Heart left ventricle (tissue), 16 donors: ENCODE measurements at regions of chr14 and their contacts with region 1.

Region 1: GRCh38 chr14:73713803-73714655 is at the start of gene PNMA1:
- DNase-seq: peak; percentile 90 to 93 (median 92)
- ATAC-seq: peak; percentile 55 to 89 (median 86)
- H3K4me3 ChIP-seq: peak within 1 kb of the TSS; percentile 69 to 94 (median 86)
- H3K27ac ChIP-seq: peak within 1 kb of the TSS; percentile 54 to 96 (median 92)
- H3K4me1 ChIP-seq: peaks cover 0 to 52% (median 26%) of the 10 kb centered on the region in 12 donors
- H3K27me3 ChIP-seq: no peaks in the 10 kb centered on the region
- CTCF ChIP-seq: no peak
- POLR2A ChIP-seq: peak in 1 of 2 donors; percentile 84
- total RNA-seq, gene PNMA1: 14.5 to 32.3 (median 25.9) TPM

Region 2: DNA sequence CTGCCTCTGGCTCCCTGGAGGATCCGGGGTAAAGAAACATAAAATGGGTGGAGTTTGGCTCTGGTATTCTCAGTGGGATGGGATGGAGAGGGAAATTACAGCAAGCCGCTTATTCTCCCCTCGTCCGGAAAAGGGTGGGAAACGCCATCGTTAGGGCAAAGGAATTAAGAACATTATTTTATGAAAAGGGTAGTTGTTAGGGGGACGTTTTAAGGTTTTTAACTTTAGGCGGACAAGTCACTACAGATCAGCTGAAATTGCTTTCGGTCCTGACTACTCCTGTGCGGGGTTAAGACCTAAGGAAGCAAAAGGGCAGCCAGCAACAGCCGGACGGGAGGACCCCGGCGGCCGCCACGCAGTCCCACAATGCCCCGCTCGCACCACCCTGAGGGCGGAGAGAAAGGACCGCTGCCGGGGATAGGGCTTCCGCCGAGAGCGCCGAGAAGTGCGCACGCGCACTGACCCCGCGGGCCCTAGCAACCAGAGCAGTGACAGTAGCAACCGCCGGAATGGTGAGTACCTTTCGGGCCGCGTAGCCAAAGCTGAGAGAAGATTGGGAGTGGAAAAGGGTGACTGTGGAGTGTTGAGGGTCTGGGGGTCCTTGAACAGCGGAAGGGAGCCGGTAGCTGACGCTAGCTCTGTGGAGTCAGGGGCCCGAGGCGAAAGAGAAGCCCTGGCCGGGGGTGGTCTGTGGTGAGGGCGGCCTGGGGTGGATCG is 69.3 kb before region 1 on chr14 and contains the start of gene DNAL1:
- intact Hi-C with region 1: loop called in 2 of 10 experiments (anchors 5 to 10 kb)
- DNase-seq: peak; percentile 94 to 97 (median 95)
- ATAC-seq: peak; percentile 99 to 100 (median 100)
- H3K4me3 ChIP-seq: peak within 1 kb of the TSS; percentile 52 to 87 (median 78)
- H3K27ac ChIP-seq: peak within 1 kb of the TSS; percentile 74 to 94 (median 89)
- H3K4me1 ChIP-seq: peaks cover 0 to 18% (median 14%) of the 10 kb centered on the region in 12 donors
- H3K27me3 ChIP-seq: no peaks in the 10 kb centered on the region
- CTCF ChIP-seq: peak in 1 of 12 donors; percentile 9
- POLR2A ChIP-seq: peak in 1 of 2 donors; percentile 73
- total RNA-seq, gene DNAL1: 5.2 to 24.5 (median 13.3) TPM